ENCODE measurements at regions of chr17 and their contacts with region 1.

Region 1: DNA sequence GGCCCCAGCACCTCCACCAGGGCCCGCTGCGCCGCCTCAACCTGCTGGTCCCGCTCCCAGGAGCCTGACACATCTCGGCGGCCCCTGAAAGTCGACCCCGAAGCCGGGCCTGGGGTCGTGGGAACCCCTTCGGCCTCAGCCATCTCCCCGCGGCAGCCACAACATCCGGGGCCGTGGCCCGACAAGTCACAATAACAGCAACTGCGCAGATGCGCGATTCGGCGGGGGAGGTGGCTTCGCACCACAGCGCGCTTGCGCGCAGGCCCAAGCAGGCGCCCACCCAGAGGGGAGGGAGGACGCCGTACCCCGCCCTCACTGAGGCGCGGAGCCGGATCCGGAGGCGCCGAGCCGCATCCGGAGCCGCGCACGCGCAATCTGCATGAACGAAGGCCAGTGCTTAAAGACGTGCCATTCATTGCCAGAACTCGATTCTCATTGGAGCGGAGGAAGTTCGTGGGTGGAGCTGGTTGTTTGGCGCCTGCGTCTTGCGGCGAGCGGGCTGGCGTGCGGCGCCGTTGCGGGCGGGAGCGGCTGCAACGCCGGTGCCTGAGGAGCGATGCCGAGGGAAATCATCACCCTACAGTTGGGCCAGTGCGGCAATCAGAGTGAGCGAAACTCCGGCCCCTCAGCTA is at the starts of genes RETREG3 and TUBG1:
- H3K4me3 ChIP-seq: peak within 1 kb of the TSS; percentile 76
- H3K27ac ChIP-seq: peak within 1 kb of the TSS; percentile 78
- H3K4me1 ChIP-seq: peaks cover 14% of the 10 kb centered on the region
- CTCF ChIP-seq: no peak; the same call in 1 of the 2 replicates

Region 2: DNA sequence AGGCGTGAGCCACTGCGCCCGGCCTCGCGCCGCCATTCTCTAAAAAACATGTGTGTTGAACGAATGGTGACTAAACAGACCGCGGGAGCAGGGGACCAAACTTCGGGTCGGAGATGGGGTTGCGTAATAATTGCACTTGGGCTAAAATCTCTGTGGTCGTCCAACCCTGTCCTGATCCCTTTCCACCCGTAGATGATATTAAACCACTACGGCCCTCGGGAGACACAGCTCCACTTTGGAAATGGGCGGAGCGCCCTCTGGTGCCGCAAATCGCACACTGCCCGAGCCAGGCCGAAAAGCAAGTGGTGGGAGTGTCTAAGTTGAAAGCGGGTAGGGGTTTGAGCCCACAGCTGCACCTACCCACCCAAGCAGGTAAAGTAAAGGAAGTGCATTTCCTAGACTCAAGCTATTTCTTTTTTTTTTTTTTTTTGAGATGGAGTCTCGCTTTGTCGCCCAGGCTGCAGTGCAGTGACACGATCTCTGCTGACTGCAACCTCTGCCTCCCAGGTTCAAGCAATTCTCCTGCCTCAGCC is 203.3 kb before region 1 on chr17:
- CTCF ChIA-PET with region 1: no interaction called
- POLR2A ChIA-PET with region 1: no interaction called
- H3K4me3 ChIP-seq: no peak overlapping the region
- H3K27ac ChIP-seq: no peak overlapping the region
- H3K4me1 ChIP-seq: 0 out of 2 replicates have a peak, but pooled peaks cover 3% of the 10 kb centered on the region
- CTCF ChIP-seq: peak; percentile 88

Region 3: DNA sequence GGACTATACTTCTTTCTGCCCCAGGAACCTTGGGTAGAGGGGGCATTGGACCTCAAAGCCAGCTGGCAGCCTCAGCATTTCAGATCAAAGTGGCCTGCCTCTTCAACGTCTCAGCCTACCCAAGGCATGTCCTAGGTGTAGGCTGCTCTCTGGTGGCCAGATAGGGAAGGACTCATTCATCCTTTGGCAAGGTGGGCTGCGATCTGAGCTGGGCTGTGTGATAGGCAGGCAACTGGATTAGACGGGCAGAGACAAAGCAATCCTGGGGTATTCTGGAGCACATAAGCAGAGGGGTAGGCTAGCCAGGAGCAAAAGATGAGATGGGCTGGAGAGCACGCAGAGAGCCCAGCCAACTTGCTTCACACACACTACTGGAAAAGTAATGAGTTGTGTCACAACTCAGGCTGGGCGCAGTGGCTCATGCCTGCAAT is 82.0 kb before region 1 on chr17:
- CTCF ChIA-PET with region 1: no interaction called
- POLR2A ChIA-PET with region 1: no interaction called
- H3K4me3 ChIP-seq: no peak overlapping the region
- H3K27ac ChIP-seq: no peak overlapping the region
- H3K4me1 ChIP-seq: peaks cover 15% of the 10 kb centered on the region
- CTCF ChIP-seq: peak; percentile 87

Region 4: DNA sequence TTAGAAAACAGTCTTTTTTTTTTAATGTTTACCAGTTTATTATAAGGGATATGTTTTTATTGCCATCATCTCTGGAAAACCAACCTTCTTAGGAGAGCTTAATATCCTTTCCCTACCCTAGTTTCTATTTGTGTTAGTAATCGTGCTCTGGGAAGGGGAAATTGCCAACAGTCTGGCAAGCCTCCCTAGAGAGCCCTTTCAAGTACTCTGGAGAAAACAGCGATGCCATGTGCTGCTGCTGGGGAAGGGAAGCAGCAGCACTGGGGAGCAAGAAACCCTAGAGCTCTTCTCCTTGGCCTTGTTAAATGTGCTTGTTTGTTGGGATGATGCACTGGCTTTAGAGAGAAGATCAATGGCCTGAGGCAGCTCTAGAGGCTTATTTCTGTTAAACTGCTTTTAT is 10.4 kb before region 1 on chr17:
- CTCF ChIA-PET with region 1: interaction called, 4 read pairs
- POLR2A ChIA-PET with region 1: interaction called, 10 read pairs
- H3K4me3 ChIP-seq: no peak overlapping the region
- H3K27ac ChIP-seq: no peak overlapping the region
- H3K4me1 ChIP-seq: peaks cover 3% of the 10 kb centered on the region; the same call in 1 of the 2 replicates
- CTCF ChIP-seq: no peak

Region 5: GRCh38 chr17:42623732-42624596 is 14.7 kb after region 1 on chr17:
- CTCF ChIA-PET with region 1: interaction called, 4 read pairs
- POLR2A ChIA-PET with region 1: interaction called, 48 read pairs
- H3K4me3 ChIP-seq: no peak overlapping the region
- H3K27ac ChIP-seq: no peak overlapping the region
- H3K4me1 ChIP-seq: no peaks in the 10 kb centered on the region
- CTCF ChIP-seq: no peak

Region 6: GRCh38 chr17:42659079-42659931 is 50.0 kb after region 1 on chr17 and contains the start of gene TUBG2:
- CTCF ChIA-PET with region 1: interaction called, 3 read pairs
- POLR2A ChIA-PET with region 1: interaction called, 17 read pairs
- H3K4me3 ChIP-seq: peak within 1 kb of the TSS; percentile 70
- H3K27ac ChIP-seq: peak within 1 kb of the TSS; percentile 84
- H3K4me1 ChIP-seq: peaks cover 13% of the 10 kb centered on the region
- CTCF ChIP-seq: no peak

Region 7: GRCh38 chr17:42677008-42677857 is 67.9 kb after region 1 on chr17:
- CTCF ChIA-PET with region 1: interaction called, 8 read pairs
- POLR2A ChIA-PET with region 1: interaction called, 56 read pairs
- H3K4me3 ChIP-seq: peak overlapping the region; percentile 82
- H3K27ac ChIP-seq: peak overlapping the region; percentile 90
- H3K4me1 ChIP-seq: peaks cover 21% of the 10 kb centered on the region
- CTCF ChIP-seq: no peak

Region 8: DNA sequence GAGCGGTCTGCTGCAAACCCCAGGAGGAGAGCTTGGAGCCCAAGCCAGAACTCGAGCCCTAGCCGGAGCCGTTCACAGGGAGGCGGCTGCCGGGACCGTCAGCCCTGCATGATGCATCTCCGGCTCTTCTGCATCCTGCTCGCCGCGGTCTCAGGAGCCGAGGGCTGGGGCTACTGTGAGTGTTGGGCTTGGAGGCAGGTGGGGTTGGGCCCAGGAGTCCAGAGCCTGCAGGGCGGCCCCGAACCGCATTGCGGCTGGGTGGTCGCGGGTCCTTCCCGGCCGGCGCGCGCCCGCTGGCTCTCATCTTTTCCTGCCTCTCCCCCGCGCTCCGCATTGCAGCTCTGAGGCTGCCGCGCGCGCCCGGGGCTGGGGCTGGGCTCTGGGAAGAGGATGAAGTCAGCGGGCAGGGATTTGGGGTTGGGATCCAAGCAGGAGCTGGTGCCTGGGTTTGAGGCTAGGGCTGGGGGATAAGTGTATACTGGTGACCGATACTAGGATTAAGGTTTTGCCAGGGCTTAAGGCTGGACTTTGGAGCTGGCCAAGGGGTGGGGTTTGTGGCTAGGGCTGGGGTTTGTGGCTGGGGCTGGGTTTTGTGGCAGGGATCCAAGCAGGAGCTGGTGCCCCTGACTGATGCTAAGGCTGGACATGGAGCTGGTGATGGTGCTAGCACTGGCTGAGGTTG is 73.6 kb after region 1 on chr17:
- CTCF ChIA-PET with region 1: interaction called, 8 read pairs
- POLR2A ChIA-PET with region 1: interaction called, 56 read pairs
- H3K4me3 ChIP-seq: peak overlapping the region; percentile 60
- H3K27ac ChIP-seq: peak overlapping the region; percentile 48; the same call in 1 of the 2 replicates
- H3K4me1 ChIP-seq: peaks cover 12% of the 10 kb centered on the region
- CTCF ChIP-seq: no peak

Measured in HEK293 (cell line).